Uterus (tissue), 4 donors: ENCODE measurements at regions of chr9 and their contacts with region 1.

Region 1: GRCh38 chr9:5593904-5594303 is 35.0 kb upstream of the RIC1 start:
- DNase-seq: no peak
- H3K4me3 ChIP-seq: no peak overlapping the region
- H3K27ac ChIP-seq: no peak overlapping the region
- H3K4me1 ChIP-seq: no peaks in the 10 kb centered on the region
- H3K27me3 ChIP-seq: no peaks in the 10 kb centered on the region
- CTCF ChIP-seq: no peak
- POLR2A ChIP-seq: no peak

Region 2: DNA sequence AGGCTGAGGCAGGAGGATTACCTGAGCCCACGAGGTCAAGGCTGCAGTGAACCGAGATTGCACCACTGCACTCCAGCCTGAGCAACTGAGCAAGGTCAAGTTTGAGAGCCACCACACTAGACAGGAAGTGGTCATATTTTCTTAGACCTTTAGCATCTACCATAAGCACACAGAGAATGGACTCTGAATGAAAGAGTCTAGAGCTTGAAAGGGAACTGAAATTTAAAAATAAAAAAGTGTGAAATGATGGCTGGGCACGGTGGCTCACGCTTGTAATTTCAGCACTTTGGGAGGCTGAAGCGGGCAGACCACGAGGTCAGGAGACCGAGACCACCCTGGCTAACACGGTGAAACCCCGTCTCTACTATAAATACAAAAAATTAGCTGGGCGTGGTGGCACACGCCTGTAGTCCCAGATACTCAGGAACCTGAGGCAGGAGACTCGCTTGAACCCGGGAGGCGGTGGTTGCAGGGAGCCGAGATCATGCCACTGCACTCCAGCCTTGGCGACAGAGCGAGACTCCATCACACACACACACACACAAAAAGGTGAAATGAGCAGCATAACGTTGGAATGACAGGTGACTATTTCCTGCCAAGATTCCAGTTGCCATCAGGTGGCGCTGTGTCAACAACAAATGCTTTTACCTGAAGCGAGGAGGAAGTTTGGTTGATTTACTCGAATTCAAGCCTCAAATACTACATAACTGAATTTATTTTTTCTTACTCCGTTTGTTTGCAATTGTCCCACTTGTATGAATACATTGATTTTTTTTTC is 831.6 kb before region 1 on chr9:
- intact Hi-C with region 1: loop called (anchors 10 kb)
- DNase-seq: peak; percentile 65 to 73
- H3K4me3 ChIP-seq: no peak overlapping the region
- H3K27ac ChIP-seq: peak overlapping the region in 1 of 2 donors; percentile 42
- H3K4me1 ChIP-seq: no peaks in the 10 kb centered on the region
- H3K27me3 ChIP-seq: no peaks in the 10 kb centered on the region
- CTCF ChIP-seq: peak; percentile 68 to 85 (median 79)
- POLR2A ChIP-seq: no peak

Region 3: DNA sequence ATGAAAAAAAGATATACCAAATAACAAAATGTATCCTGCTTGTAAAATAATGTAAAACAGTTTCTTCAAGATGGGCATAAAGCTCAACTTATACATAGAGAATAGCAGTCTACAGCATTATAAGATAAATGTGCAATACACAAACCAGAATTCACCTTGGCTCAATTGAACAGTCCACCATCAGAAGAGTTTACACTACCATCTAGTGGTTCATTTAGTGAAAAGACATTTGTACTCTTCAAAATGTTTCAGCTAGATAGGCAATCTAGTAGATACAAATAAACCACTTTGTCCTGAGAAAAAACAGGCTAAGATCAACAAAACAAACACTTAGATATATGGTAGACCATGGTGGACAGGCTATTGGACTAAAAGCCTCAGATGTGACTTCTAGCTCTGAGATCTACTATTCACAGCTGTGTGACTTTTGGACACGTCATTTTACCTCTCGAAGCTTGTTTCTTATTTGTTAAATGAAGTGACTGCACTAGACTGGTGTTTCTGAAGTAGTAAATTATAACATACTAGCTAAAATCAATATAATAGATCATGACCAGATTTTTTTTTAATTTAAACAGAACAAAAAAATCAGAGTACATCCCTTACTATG is 712.2 kb after region 1 on chr9:
- intact Hi-C with region 1: no loop called
- DNase-seq: no peak
- H3K4me3 ChIP-seq: no peak overlapping the region
- H3K27ac ChIP-seq: no peak overlapping the region
- H3K4me1 ChIP-seq: no peaks in the 10 kb centered on the region
- H3K27me3 ChIP-seq: no peaks in the 10 kb centered on the region
- CTCF ChIP-seq: peak; percentile 61 to 83 (median 67)
- POLR2A ChIP-seq: no peak